Gastrocnemius medialis (tissue), 4 donors: ENCODE measurements at regions of chr1 and their contacts with region 1.

Region 1: DNA sequence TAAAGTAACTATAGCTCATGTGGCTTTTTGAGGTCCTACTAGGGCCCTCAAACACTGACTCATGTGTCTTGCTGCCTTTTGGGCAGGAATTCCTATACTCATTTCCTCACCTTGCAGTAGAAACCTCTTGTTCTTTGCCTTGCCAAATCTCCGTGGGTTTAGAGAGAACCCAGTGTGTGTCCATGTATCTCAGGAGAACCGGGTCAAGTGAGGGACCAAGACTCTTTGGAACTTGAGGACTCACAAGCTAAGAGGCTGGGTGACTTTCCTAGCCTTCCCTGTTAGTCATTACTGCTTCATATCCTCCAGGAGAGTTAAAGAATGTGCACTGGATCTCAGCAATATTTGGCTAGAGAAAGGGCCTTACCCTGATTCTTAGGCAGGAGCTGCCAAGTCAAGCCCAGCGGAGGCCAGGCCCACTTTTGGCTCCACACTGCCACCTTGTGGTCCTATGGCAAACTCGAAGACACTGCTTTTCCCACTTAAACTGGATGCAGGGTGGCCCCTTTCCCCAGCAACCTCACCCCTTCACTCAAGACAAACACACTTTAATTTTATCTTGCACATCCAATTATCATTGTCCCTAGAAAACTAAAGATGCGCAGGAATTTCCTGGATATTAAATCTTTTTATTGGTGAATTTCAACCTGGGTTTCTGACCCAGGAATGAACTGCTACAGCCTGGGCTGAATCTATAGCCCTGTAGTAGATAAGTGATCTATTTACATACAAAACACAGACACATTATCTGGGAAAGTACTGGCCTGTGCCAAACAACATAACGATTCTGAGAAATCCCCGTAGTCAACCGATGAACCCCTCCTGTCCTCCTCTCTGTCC is 10.6 kb downstream of the AVPR1B start:
- DNase-seq: peak; percentile 48 to 69
- ATAC-seq: peak; percentile 83 to 84
- H3K4me3 ChIP-seq: no peak overlapping the region
- H3K27ac ChIP-seq: no peak overlapping the region
- H3K4me1 ChIP-seq: no peaks in the 10 kb centered on the region
- H3K27me3 ChIP-seq: no peaks in the 10 kb centered on the region
- CTCF ChIP-seq: peak; percentile 72 to 80 (median 76)
- POLR2A ChIP-seq: no peak

Region 2: GRCh38 chr1:205775015-205775716 is 331.4 kb before region 1 on chr1 and contains the start of gene RAB29:
- in situ Hi-C with region 1: loop called in 1 of 4 experiments (anchors 25 kb)
- intact Hi-C with region 1: no loop called
- DNase-seq: peak; percentile 80 to 84
- ATAC-seq: peak; percentile 98 to 100
- H3K4me3 ChIP-seq: peak within 1 kb of the TSS; percentile 81 to 90 (median 85)
- H3K27ac ChIP-seq: peak within 1 kb of the TSS; percentile 65 to 77 (median 73)
- H3K4me1 ChIP-seq: peaks cover 3 to 9% of the 10 kb centered on the region in 2 donors
- H3K27me3 ChIP-seq: no peaks in the 10 kb centered on the region
- CTCF ChIP-seq: no peak
- POLR2A ChIP-seq: peak; percentile 56 to 59
- total RNA-seq, gene RAB29: 8.4 to 13.8 (median 10.7) TPM

Region 3: DNA sequence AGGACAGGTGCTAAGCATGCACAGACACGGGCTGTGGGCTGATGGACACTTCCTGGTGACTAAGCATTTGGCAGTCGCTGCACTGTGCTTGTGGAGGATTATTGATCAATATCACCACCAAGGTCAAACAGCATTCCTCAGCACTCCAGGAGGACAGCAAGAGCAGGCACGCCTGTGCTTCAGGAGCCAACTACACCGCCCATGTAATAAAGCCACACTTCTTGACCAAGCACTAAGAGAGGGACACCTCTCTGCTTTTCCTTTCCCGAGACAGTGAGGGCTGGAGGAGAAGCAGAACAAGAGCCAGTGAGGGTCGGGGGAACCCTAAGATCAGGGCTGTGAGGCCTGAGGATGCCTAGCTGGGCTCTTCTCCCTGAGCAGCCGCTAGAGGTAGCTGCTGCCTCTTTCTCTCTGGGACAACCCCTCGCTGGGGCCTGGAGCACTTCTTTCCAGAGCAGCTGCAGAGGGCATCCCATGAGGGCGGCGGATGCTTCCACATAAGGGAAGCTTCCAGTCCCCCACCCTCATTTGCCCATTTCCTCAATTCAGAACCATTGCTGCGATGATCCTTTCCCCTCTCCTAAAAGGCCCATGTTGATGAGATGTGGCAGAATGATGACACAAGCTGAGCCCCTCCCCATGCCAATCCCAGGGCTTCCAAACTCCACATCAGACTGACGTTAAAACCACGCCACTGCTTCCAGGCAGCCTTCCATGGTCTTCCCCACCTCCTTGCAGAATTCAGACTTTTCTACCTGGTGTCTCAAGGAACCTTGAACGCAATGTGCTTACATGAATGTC is 122.4 kb before region 1 on chr1:
- in situ Hi-C with region 1: loop called (anchors 5 to 10 kb)
- intact Hi-C with region 1: loop called (anchors 1 kb)
- DNase-seq: peak; percentile 38 to 50
- ATAC-seq: peak; percentile 71 to 82
- H3K4me3 ChIP-seq: no peak overlapping the region
- H3K27ac ChIP-seq: no peak overlapping the region
- H3K4me1 ChIP-seq: peaks cover 0 to 4% of the 10 kb centered on the region in 2 donors
- H3K27me3 ChIP-seq: no peaks in the 10 kb centered on the region
- CTCF ChIP-seq: peak; percentile 38 to 67 (median 58)
- POLR2A ChIP-seq: no peak

Region 4: GRCh38 chr1:206030714-206031113 is 75.8 kb before region 1 on chr1:
- in situ Hi-C with region 1: loop called in 1 of 4 experiments (anchors 5 kb)
- intact Hi-C with region 1: loop called (anchors 5 kb)
- DNase-seq: peak; percentile 23 to 28
- ATAC-seq: peak in 1 of 2 donors; percentile 71
- H3K4me3 ChIP-seq: no peak overlapping the region
- H3K27ac ChIP-seq: no peak overlapping the region
- H3K4me1 ChIP-seq: no peaks in the 10 kb centered on the region
- H3K27me3 ChIP-seq: no peaks in the 10 kb centered on the region
- CTCF ChIP-seq: peak in 3 of 5 experiments; percentile 26 to 53 (median 49)
- POLR2A ChIP-seq: no peak

Region 5: DNA sequence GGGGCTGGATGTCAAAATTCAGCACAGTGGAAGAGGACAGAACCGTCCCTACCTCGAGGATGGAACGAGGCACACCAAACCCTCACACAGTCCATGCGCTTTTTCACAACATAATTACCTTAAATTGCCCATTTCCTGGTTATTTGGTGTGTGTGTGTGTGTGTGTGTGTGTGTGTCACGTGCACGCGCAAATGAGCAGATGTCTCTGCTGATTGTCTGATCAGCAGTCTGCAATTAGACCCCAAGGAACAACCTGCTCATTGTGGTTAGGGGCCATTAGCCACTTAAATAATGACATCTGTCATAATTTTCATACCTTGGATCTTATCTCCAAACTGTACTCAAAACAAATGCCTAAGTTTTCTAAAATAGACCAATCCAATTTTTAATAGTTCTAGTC is 12.5 kb before region 1 on chr1:
- in situ Hi-C with region 1: no loop called
- intact Hi-C with region 1: no loop called
- DNase-seq: no peak
- ATAC-seq: no peak
- H3K4me3 ChIP-seq: no peak overlapping the region
- H3K27ac ChIP-seq: no peak overlapping the region
- H3K4me1 ChIP-seq: no peaks in the 10 kb centered on the region
- H3K27me3 ChIP-seq: peaks cover 0 to 3% (median 0%) of the 10 kb centered on the region in 3 donors
- CTCF ChIP-seq: no peak
- POLR2A ChIP-seq: no peak